ENCODE measurements at regions of chr3 and their contacts with region 1.

Region 1: GRCh38 chr3:149657926-149658733 is at the start of gene WWTR1:
- DNase-seq: peak; percentile 72 to 85 (median 76)
- ATAC-seq: peak; percentile 75
- H3K4me3 ChIP-seq: peak within 1 kb of the TSS; percentile 20
- H3K4me1 ChIP-seq: peaks cover 18% of the 10 kb centered on the region
- CTCF ChIP-seq: no peak
- total RNA-seq, gene WWTR1: 11.6 to 217 (median 20.7) TPM

Region 2: DNA sequence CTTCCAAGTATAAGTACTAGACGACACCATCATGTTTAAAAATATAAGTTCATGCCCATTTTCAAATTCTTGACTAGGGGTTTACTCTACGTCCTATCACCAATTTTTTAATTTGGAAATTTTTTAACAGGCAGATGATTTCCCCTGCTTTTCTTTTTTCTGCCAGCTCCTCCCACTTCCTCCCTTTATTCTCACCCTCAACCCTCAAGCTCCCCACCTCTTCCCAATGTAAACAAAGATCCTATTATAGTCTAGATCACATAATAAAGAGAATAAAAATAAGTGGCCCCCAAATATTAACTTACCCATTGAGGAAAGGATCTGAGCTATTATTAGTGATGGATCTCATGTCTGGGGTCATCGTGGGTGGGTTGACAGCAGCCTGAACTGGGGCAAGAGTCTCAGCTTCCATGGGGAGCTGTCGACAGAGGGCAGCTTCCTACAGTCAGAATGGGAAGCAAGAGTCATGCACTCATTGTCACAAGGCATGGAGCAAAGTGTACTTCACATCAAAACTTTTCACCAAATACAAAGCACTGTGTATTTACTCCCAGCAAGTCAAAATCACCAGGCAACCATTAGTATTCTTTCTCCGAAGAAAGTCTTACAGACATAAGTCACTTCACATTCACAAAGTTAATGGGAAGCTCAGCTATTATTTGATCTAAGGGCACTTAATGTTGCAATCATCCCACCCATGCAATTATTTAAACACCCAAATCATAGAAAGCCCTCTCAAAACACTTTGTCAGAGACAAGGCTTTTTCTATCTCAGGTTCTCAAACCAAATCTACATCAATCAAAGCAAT is 130.4 kb before region 1 on chr3:
- intact Hi-C with region 1: loop called (anchors 5 to 10 kb)
- DNase-seq: no peak
- ATAC-seq: peak; percentile 61
- H3K4me3 ChIP-seq: no peak overlapping the region
- H3K4me1 ChIP-seq: peaks cover 9% of the 10 kb centered on the region
- CTCF ChIP-seq: no peak

Region 3: GRCh38 chr3:149536429-149536828 is 121.7 kb before region 1 on chr3:
- intact Hi-C with region 1: loop called in 1 of 2 experiments (anchors 10 kb)
- DNase-seq: no peak
- ATAC-seq: no peak
- H3K4me3 ChIP-seq: no peak overlapping the region
- H3K4me1 ChIP-seq: no peaks in the 10 kb centered on the region
- CTCF ChIP-seq: no peak

Region 4: DNA sequence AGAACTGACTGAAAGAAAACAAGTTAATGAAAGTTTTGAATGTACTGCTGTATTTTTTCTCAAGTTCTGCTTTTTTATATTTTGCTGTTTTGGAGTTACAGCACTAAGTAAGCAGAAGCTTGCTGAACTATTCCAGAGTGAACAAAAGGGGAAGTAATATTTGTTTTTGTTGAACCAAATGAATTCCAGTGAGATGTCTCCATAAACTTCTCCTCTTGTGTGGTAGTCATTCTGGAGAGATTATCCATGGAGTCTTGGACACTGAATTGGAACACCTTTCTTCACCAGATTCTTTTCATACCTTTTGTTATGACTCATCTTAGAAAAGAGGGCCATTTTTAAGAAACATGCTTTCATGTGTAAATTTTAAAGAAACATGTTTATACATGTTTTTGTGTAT is 125.4 kb after region 1 on chr3:
- intact Hi-C with region 1: no loop called
- DNase-seq: no peak
- ATAC-seq: no peak
- H3K4me3 ChIP-seq: no peak overlapping the region
- H3K4me1 ChIP-seq: no peaks in the 10 kb centered on the region
- CTCF ChIP-seq: no peak

Measured in mucosa of descending colon (tissue), 3 donors.